ENCODE measurements at regions of chr6 and their contacts with region 1.

Region 1: GRCh38 chr6:169751242-169752073 is at the starts of genes DYNLT2 and ERMARD:
- DNase-seq: peak; percentile 94
- ATAC-seq: peak; percentile 97
- H3K4me3 Mint-ChIP-seq: peak within 1 kb of the TSS; percentile 100
- H3K27ac Mint-ChIP-seq: peak within 1 kb of the TSS; percentile 100
- H3K4me1 Mint-ChIP-seq: peaks cover 28% of the 10 kb centered on the region
- H3K27me3 Mint-ChIP-seq: no peaks in the 10 kb centered on the region
- CTCF ChIP-seq: no peak
- total RNA-seq, gene DYNLT2: 2.2 to 2.4 TPM
- total RNA-seq, gene ERMARD: 24.9 to 26.6 TPM

Region 2: DNA sequence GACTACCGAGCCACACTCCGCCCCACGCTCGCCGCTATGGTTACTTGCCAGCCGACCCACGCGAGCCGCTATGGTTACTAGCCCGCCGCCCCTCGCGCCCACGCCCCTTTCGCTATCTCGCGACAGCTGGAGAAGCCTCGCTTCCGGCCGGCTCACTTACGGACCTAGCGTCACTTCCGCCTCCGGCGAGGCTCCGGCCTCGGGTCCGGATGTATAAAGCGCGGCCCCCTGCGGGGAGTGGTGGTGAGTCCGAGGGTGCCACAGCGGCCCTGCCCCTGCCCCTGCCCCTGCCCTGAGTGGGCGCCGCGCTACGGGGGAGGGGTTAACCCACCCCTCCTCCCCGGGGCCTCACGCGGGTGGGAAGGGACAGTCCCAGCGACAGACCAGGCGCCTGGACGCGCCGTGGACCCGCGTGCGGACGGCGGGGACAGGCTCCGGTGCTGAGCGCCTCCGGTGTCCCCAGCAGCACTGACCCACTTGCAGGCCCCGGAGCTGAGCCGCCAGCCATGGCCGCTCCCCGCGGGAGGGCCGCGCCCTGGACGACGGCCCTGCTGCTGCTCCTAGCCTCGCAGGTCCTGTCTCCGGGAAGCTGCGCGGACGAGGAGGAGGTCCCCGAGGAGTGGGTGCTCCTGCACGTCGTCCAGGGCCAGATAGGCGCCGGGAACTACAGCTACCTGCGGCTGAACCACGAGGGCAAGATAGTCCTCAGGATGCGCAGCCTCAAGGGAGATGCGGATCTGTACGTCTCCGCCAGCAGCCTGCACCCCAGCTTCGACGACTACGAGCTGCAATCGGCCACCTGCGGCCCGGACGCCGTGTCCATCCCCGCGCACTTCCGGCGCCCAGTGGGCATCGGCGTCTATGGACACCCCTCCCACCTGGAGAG is 49.3 kb before region 1 on chr6 and contains the starts of genes C6orf120 and WDR27:
- CTCF ChIA-PET with region 1: interaction called, 4 read pairs
- POLR2A ChIA-PET with region 1: interaction called, 11 read pairs
- intact Hi-C with region 1: loop called (anchors 2 kb)
- DNase-seq: peak; percentile 98
- ATAC-seq: peak; percentile 93
- H3K4me3 Mint-ChIP-seq: peak within 1 kb of the TSS; percentile 93
- H3K27ac Mint-ChIP-seq: peak within 1 kb of the TSS; percentile 93
- H3K4me1 Mint-ChIP-seq: peaks cover 49% of the 10 kb centered on the region
- H3K27me3 Mint-ChIP-seq: no peaks in the 10 kb centered on the region
- CTCF ChIP-seq: no peak
- total RNA-seq, gene C6orf120: 14.2 to 16.3 TPM
- total RNA-seq, gene WDR27: 48.8 to 49.6 TPM

Region 3: GRCh38 chr6:169783401-169783800 is 31.9 kb after region 1 on chr6:
- CTCF ChIA-PET with region 1: no interaction called
- POLR2A ChIA-PET with region 1: no interaction called
- intact Hi-C with region 1: no loop called
- DNase-seq: no peak
- ATAC-seq: no peak
- H3K4me3 Mint-ChIP-seq: no peak overlapping the region
- H3K27ac Mint-ChIP-seq: no peak overlapping the region
- H3K4me1 Mint-ChIP-seq: no peaks in the 10 kb centered on the region
- H3K27me3 Mint-ChIP-seq: no peaks in the 10 kb centered on the region
- CTCF ChIP-seq: no peak

Measured in activated CD8-positive, alpha-beta T cell treated with anti-CD3 and anti-CD28 coated beads for 36 hours (primary cell).